ENCODE measurements at regions of chr20 and their contacts with region 1.

Region 1: GRCh38 chr20:36754656-36755222 is 8.8 kb upstream of the NDRG3 start:
- DNase-seq: peak; percentile 65
- ATAC-seq: peak; percentile 85
- H3K4me3 Mint-ChIP-seq: no peak overlapping the region
- H3K27ac Mint-ChIP-seq: no peak overlapping the region
- H3K4me1 Mint-ChIP-seq: peaks cover 14% of the 10 kb centered on the region
- H3K27me3 Mint-ChIP-seq: no peaks in the 10 kb centered on the region

Region 2: GRCh38 chr20:36666181-36666740 is 88.5 kb before region 1 on chr20:
- CTCF ChIA-PET with region 1: interaction called, 12 read pairs
- DNase-seq: no peak
- ATAC-seq: peak; percentile 51
- H3K4me3 Mint-ChIP-seq: no peak overlapping the region
- H3K27ac Mint-ChIP-seq: no peak overlapping the region
- H3K4me1 Mint-ChIP-seq: no peaks in the 10 kb centered on the region
- H3K27me3 Mint-ChIP-seq: no peaks in the 10 kb centered on the region

Region 3: GRCh38 chr20:36773597-36774390 is 19.1 kb after region 1 on chr20 and contains the start of gene DSN1:
- CTCF ChIA-PET with region 1: interaction called, 31 read pairs
- DNase-seq: peak; percentile 99
- ATAC-seq: peak; percentile 94
- H3K4me3 Mint-ChIP-seq: peak within 1 kb of the TSS; percentile 86
- H3K27ac Mint-ChIP-seq: peak within 1 kb of the TSS; percentile 95
- H3K4me1 Mint-ChIP-seq: peaks cover 37% of the 10 kb centered on the region
- H3K27me3 Mint-ChIP-seq: no peaks in the 10 kb centered on the region
- total RNA-seq, gene DSN1: 36.0 to 42.7 TPM

Region 4: DNA sequence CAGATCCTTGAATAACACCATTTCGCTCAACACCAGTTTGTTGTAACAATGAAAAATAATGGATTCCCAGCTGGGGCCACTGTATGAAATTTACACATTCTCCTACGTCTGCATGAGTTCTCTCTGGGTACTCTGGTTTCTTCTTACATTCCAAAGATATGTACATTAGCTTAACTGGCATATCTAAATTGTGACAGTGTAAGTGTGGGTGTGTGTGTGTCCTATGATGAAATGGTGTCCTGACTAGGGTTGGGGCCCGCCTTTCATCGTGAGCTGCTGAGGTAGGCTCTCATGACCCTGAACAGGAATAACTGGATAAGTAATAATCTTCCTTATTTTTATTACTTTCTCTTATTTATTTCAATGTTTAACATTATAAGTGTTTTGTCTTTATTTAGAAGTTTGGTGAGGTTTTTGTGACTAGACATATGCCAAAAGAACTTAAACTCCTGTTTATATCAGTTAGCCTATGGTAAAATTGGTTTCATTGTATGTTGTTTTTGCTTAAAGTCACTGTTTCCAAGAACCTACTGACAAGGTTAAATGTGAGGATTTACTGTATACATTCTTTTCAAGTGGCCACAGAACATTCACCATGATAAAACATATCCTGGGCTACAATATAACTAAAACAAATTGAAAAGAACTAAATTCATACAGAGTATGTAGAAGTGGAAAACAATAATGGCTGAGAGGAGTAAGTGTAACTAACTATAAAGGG is 298.7 kb after region 1 on chr20:
- CTCF ChIA-PET with region 1: no interaction called
- DNase-seq: no peak
- ATAC-seq: no peak
- H3K4me3 Mint-ChIP-seq: no peak overlapping the region
- H3K27ac Mint-ChIP-seq: peak overlapping the region; percentile 39
- H3K4me1 Mint-ChIP-seq: peaks cover 2% of the 10 kb centered on the region
- H3K27me3 Mint-ChIP-seq: no peaks in the 10 kb centered on the region

Measured in activated CD8-positive, alpha-beta memory T cell treated with anti-CD3 and anti-CD28 coated beads, Interleukin-2, amount 10 ng/mL, durations not matched to agents 7 days and 5 days (primary cell).